AG04450 (cell line): ENCODE measurements at regions of chr6 and their contacts with region 1.

Region 1: DNA sequence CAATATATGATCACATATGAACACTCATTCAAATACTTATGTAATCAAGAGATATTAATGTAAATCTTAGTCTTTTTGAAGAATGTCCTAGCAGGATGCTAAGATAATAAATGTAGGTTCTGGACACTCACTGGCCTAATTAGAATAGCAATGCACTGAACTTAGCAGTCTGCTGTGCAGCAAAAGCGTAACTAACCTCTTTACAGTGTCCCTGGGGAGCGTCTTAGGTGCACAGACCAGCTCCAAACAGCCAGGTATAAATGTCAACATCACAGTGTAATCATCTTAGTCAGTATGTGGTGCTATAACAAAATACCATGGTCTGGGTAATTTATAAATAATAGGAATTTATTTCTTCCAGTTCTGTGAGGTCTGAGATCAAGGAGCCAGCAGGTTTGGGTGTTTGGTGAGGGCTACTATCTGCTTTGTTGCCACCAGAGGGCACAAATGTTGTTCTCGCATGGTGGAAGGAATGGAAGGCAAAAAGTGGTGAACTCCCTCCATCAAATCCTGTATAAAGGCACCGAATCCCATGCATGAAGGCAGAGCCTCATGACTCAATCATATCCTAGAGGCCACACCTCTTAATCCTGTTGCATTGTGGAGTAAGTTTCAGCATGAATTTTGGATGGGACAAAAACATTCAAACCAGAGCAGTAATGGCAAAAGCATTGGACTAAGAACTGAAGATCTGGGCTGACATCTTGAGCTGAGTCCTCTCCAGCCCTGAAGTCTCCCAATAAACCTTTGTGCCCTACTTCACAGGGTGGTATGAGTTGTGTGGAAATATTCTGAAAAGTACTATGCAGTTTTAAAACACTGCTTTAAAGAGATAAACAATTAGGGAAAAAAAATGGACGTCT is 41.8 kb upstream of the FOXO3 start:
- DNase-seq: no peak
- H3K4me3 ChIP-seq: no peak overlapping the region
- H3K27ac ChIP-seq: no peak overlapping the region
- H3K27me3 ChIP-seq: no peaks in the 10 kb centered on the region
- CTCF ChIP-seq: peak; percentile 58

Region 2: DNA sequence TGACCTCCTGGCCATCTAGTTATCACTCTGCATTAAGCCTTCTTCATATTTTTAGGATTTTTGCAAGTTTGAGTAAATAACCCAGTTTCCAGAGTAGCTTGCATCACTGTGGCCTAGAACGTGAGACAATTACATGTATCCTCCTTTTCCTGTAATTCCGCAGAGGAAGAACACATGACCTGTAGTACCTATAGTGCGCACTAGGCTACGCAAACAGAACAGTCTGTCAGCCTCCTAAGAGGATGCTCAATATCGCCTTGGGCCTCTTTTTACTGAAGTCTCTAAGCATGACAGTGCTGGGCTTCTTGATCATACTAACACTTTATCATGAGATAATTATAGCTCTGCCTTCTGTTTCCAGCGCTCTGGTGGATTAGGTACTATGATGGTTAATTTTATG is 373.3 kb before region 1 on chr6:
- CTCF ChIA-PET with region 1: no interaction called
- POLR2A ChIA-PET with region 1: no interaction called
- DNase-seq: no peak
- H3K4me3 ChIP-seq: no peak overlapping the region
- H3K27ac ChIP-seq: no peak overlapping the region
- H3K27me3 ChIP-seq: peaks cover 14% of the 10 kb centered on the region
- CTCF ChIP-seq: no peak

Region 3: GRCh38 chr6:108222504-108222903 is 296.4 kb before region 1 on chr6:
- CTCF ChIA-PET with region 1: interaction called, 13 read pairs
- POLR2A ChIA-PET with region 1: no interaction called
- DNase-seq: peak; percentile 3
- H3K4me3 ChIP-seq: no peak overlapping the region
- H3K27ac ChIP-seq: no peak overlapping the region
- H3K27me3 ChIP-seq: no peaks in the 10 kb centered on the region
- CTCF ChIP-seq: no peak